B cell (primary cell): ENCODE measurements at regions of chr19 and their contacts with region 1.

Region 1: GRCh38 chr19:3035542-3036118 is 6.5 kb upstream of the TLE2 start:
- DNase-seq: peak; percentile 97
- ATAC-seq: peak; percentile 91
- H3K4me3 ChIP-seq: peak overlapping the region; percentile 66 to 93 (median 72)
- H3K4me3 Mint-ChIP-seq: peak overlapping the region; percentile 87
- H3K27ac ChIP-seq: peak overlapping the region; percentile 65 to 78
- H3K27ac Mint-ChIP-seq: peak overlapping the region; percentile 92
- H3K4me1 ChIP-seq: peaks cover 12 to 19% of the 10 kb centered on the region in 2 donors
- H3K4me1 Mint-ChIP-seq: peaks cover 21% of the 10 kb centered on the region
- H3K27me3 ChIP-seq: no peaks in the 10 kb centered on the region
- H3K27me3 Mint-ChIP-seq: peaks cover 10% of the 10 kb centered on the region
- CTCF ChIP-seq: no peak

Region 2: GRCh38 chr19:2840794-2841790 is 194.5 kb before region 1 on chr19 and contains the start of gene ZNF555:
- CTCF ChIA-PET with region 1: no interaction called
- POLR2A ChIA-PET with region 1: interaction called, 4 read pairs
- intact Hi-C with region 1: loop called (anchors 2 kb)
- DNase-seq: peak; percentile 99
- ATAC-seq: peak; percentile 93
- H3K4me3 ChIP-seq: peak within 1 kb of the TSS; percentile 34 to 77 (median 73)
- H3K4me3 Mint-ChIP-seq: peak within 1 kb of the TSS; percentile 95
- H3K27ac ChIP-seq: peak within 1 kb of the TSS; percentile 83 to 86
- H3K27ac Mint-ChIP-seq: peak within 1 kb of the TSS; percentile 95
- H3K4me1 ChIP-seq: peaks cover 12 to 15% of the 10 kb centered on the region in 2 donors
- H3K4me1 Mint-ChIP-seq: peaks cover 26% of the 10 kb centered on the region
- H3K27me3 ChIP-seq: no peaks in the 10 kb centered on the region
- H3K27me3 Mint-ChIP-seq: no peaks in the 10 kb centered on the region
- CTCF ChIP-seq: peak; percentile 74
- total RNA-seq, gene ZNF555: 7.4 and 9.7 TPM in 2 replicates

Region 3: GRCh38 chr19:2962045-2962561 is 73.5 kb before region 1 on chr19:
- CTCF ChIA-PET with region 1: interaction called, 15 read pairs
- POLR2A ChIA-PET with region 1: no interaction called
- intact Hi-C with region 1: no loop called
- DNase-seq: peak; percentile 91
- ATAC-seq: peak; percentile 73
- H3K4me3 ChIP-seq: peak overlapping the region in 3 of 5 experiments; percentile 2 to 33 (median 9)
- H3K4me3 Mint-ChIP-seq: peak overlapping the region; percentile 2
- H3K27ac ChIP-seq: no peak overlapping the region
- H3K27ac Mint-ChIP-seq: peak overlapping the region; percentile 71
- H3K4me1 ChIP-seq: peaks cover 13 to 18% of the 10 kb centered on the region in 2 donors
- H3K4me1 Mint-ChIP-seq: peaks cover 14% of the 10 kb centered on the region
- H3K27me3 ChIP-seq: no peaks in the 10 kb centered on the region
- H3K27me3 Mint-ChIP-seq: no peaks in the 10 kb centered on the region
- CTCF ChIP-seq: peak; percentile 82

Region 4: DNA sequence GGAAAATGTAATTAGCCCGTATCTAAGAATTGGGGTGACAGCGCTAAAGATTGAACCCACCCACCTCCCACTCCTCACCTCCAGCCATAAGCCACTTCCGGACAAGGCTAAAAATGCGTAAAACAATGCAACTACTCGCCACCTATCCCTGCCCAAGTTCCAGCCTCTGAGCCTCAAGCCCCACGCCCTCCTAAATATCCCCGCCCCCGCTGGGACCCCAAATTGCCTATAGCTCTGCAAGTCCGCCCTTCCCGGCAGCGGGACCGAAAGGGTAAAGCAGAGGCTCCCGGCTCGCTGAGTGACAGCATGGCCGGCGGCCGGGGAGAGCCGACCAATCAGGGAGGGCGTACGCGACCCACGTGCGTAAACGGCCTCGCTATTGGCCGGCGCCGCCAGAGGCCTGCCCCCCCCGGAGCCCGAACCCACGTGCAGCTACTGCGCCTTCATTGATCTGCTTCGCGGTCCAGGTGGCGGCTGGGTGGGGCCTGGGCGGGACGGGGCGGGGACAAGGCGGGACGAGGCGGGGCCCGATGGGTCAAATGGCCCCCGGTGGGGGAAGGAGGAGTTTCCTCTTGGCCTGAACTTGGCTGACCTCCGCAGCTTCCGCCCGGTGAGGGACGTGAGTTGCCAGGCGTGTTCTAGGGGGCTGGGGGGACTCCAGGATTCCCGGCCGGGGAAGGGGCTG is 58.5 kb before region 1 on chr19 and contains the start of gene TLE6:
- CTCF ChIA-PET with region 1: interaction called, 5 read pairs
- POLR2A ChIA-PET with region 1: interaction called, 9 read pairs
- intact Hi-C with region 1: loop called (anchors 1 kb)
- DNase-seq: peak; percentile 96
- ATAC-seq: peak; percentile 99
- H3K4me3 ChIP-seq: peak within 1 kb of the TSS; percentile 55 to 77 (median 65)
- H3K4me3 Mint-ChIP-seq: peak within 1 kb of the TSS; percentile 96
- H3K27ac ChIP-seq: peak within 1 kb of the TSS in 1 of 2 donors; percentile 31
- H3K27ac Mint-ChIP-seq: peak within 1 kb of the TSS; percentile 72
- H3K4me1 ChIP-seq: peaks cover 14 to 27% of the 10 kb centered on the region in 2 donors
- H3K4me1 Mint-ChIP-seq: peaks cover 18% of the 10 kb centered on the region
- H3K27me3 ChIP-seq: peaks cover 0 to 5% (median 0%) of the 10 kb centered on the region in 4 experiments
- H3K27me3 Mint-ChIP-seq: no peaks in the 10 kb centered on the region
- CTCF ChIP-seq: no peak
- total RNA-seq, gene TLE6: 0.61 and 1.5 TPM in 2 replicates

Region 5: DNA sequence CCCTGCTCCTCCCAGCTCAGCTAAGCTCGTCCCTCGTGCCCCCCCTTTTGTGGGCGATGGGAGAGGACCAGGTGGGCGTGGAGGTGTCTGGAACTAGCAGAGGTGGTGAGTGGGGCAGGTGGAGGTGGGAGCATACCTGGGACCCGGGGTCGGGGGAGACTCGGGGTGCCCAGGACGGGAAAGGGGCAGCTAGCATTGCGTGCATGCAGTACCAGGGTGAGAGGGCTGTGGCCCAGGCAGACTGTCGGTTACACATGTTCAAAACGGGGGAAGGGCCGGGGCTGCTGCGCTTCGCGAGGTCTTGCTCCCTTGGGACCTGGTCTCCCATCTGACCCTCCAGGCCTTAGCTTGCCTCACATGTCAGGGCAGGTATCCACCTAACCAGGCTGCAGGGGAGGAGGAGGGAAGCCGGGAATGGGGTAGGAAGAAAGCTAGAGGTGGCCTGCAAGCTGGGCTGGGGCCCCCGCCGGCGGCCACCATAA is 17.6 kb after region 1 on chr19:
- CTCF ChIA-PET with region 1: interaction called, 8 read pairs
- POLR2A ChIA-PET with region 1: interaction called, 13 read pairs
- intact Hi-C with region 1: no loop called
- DNase-seq: no peak
- ATAC-seq: no peak
- H3K4me3 ChIP-seq: no peak overlapping the region
- H3K4me3 Mint-ChIP-seq: no peak overlapping the region
- H3K27ac ChIP-seq: no peak overlapping the region
- H3K27ac Mint-ChIP-seq: no peak overlapping the region
- H3K4me1 ChIP-seq: peaks cover 2 to 10% of the 10 kb centered on the region in 2 donors
- H3K4me1 Mint-ChIP-seq: peaks cover 18% of the 10 kb centered on the region
- H3K27me3 ChIP-seq: no peaks in the 10 kb centered on the region
- H3K27me3 Mint-ChIP-seq: no peaks in the 10 kb centered on the region
- CTCF ChIP-seq: no peak

Region 6: DNA sequence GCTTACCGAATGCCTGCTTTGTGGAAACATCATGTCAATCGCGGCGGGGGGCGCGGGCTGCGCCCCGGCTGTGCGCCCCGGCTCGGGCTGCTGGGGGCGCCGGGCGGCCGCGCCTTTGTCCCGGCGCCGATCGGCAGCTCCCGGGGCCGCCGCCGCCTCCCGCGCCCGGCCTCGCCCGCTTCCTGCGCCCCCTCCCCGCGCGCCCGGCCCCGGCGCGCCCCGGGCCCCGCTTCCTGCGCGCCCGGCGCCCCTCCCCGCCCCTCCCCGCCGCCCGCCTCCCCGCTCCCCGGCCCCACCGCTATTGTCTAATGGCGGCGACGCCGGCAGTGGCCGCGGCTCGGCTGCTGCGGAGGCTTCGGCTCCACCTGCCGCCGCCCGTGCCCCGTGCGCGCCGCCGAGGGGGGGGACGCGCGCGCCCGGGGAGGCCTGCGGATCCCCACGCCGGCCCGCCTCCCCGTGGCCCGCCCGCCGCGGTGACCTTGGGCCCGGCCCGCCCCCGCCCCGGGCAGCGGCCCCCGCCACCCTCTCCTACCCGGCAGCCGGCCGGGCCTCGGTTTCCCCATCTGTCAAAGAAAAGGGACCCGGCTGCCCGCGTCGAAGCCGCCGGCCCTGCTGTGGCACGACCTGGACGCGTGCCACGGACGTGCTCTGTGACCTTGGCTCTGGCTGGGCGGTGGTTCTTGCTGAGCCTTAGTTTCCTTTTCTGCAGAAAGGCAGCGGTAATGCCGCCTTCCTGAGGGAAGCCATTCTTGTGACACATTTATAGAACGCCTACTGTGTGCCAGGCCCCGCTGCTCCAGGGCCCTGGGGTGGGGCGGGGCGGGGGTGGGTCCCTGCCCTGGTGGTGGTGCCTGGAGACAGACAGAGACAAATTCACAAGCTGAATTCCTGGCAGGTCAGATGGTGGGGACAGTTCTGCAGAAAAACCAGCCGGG is 26.8 kb after region 1 on chr19 and contains the start of gene TLE5:
- CTCF ChIA-PET with region 1: interaction called, 32 read pairs
- POLR2A ChIA-PET with region 1: interaction called, 35 read pairs
- intact Hi-C with region 1: loop called (anchors 1 kb)
- DNase-seq: peak; percentile 84
- ATAC-seq: peak; percentile 48
- H3K4me3 ChIP-seq: peak within 1 kb of the TSS; percentile 44 to 85 (median 80)
- H3K4me3 Mint-ChIP-seq: peak within 1 kb of the TSS; percentile 92
- H3K27ac ChIP-seq: peak within 1 kb of the TSS; percentile 83 to 90
- H3K27ac Mint-ChIP-seq: peak within 1 kb of the TSS; percentile 95
- H3K4me1 ChIP-seq: peaks cover 46 to 76% of the 10 kb centered on the region in 2 donors
- H3K4me1 Mint-ChIP-seq: peaks cover 61% of the 10 kb centered on the region
- H3K27me3 ChIP-seq: no peaks in the 10 kb centered on the region
- H3K27me3 Mint-ChIP-seq: no peaks in the 10 kb centered on the region
- CTCF ChIP-seq: no peak
- total RNA-seq, gene TLE5: 665 and 697 TPM in 2 replicates

Region 7: GRCh38 chr19:3102228-3103140 is 66.9 kb after region 1 on chr19:
- CTCF ChIA-PET with region 1: interaction called, 11 read pairs
- POLR2A ChIA-PET with region 1: no interaction called
- intact Hi-C with region 1: no loop called
- DNase-seq: no peak
- ATAC-seq: no peak
- H3K4me3 ChIP-seq: no peak overlapping the region
- H3K4me3 Mint-ChIP-seq: no peak overlapping the region
- H3K27ac ChIP-seq: no peak overlapping the region
- H3K27ac Mint-ChIP-seq: no peak overlapping the region
- H3K4me1 ChIP-seq: peaks cover 20 to 33% of the 10 kb centered on the region in 2 donors
- H3K4me1 Mint-ChIP-seq: peaks cover 20% of the 10 kb centered on the region
- H3K27me3 ChIP-seq: peaks cover 0 to 10% (median 2%) of the 10 kb centered on the region in 4 experiments
- H3K27me3 Mint-ChIP-seq: peaks cover 5% of the 10 kb centered on the region
- CTCF ChIP-seq: no peak

Region 8: GRCh38 chr19:3207466-3208242 is 172.0 kb after region 1 on chr19:
- CTCF ChIA-PET with region 1: no interaction called
- POLR2A ChIA-PET with region 1: no interaction called
- intact Hi-C with region 1: no loop called
- DNase-seq: no peak
- ATAC-seq: no peak
- H3K4me3 ChIP-seq: no peak overlapping the region
- H3K4me3 Mint-ChIP-seq: no peak overlapping the region
- H3K27ac ChIP-seq: no peak overlapping the region
- H3K27ac Mint-ChIP-seq: no peak overlapping the region
- H3K4me1 ChIP-seq: no peaks in the 10 kb centered on the region
- H3K4me1 Mint-ChIP-seq: no peaks in the 10 kb centered on the region
- H3K27me3 ChIP-seq: no peaks in the 10 kb centered on the region
- H3K27me3 Mint-ChIP-seq: no peaks in the 10 kb centered on the region
- CTCF ChIP-seq: no peak